ENCODE measurements at regions of chr13 and their contacts with region 1.

Region 1: GRCh38 chr13:72839831-72840426 is 58.0 kb downstream of the PIBF1 start:
- DNase-seq: peak; percentile 39 to 54
- H3K4me3 ChIP-seq: no peak overlapping the region
- H3K27ac ChIP-seq: no peak overlapping the region
- H3K4me1 ChIP-seq: no peaks in the 10 kb centered on the region
- H3K27me3 ChIP-seq: no peaks in the 10 kb centered on the region
- CTCF ChIP-seq: peak; percentile 81

Region 2: DNA sequence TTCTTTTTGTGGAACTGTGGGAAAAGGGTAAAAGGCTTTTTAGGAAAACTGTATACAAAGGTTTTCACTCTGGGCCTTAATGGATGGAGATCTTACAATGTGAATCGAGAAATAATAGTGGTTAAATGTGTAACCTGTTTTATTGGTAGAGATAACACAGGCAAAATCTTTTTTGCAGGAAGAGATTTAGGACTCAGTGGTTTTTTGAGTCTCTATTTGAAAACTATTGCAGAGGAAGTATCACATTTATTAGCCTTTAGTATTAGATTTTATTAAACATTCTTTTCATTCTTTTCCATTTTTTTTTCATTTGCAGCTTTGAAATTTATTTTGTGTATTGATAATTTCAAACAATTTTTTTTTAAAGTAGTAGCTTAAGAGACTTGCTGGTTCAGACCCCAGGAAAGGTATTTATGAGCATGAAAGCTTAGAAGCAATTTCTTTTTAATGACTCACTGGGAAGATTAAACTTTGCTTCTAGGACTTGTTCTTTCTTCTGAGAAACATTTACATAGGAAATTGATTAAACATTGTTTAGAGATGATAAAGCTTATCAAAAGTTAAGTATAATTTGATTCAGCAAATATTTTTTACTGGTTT is 229.4 kb after region 1 on chr13:
- CTCF ChIA-PET with region 1: no interaction called
- POLR2A ChIA-PET with region 1: interaction called, 10 read pairs
- intact Hi-C with region 1: no loop called
- DNase-seq: peak in 1 of 2 experiments; percentile 62
- H3K4me3 ChIP-seq: no peak overlapping the region
- H3K27ac ChIP-seq: peak overlapping the region; percentile 23
- H3K4me1 ChIP-seq: peaks cover 69% of the 10 kb centered on the region
- H3K27me3 ChIP-seq: no peaks in the 10 kb centered on the region
- CTCF ChIP-seq: no peak

Region 3: DNA sequence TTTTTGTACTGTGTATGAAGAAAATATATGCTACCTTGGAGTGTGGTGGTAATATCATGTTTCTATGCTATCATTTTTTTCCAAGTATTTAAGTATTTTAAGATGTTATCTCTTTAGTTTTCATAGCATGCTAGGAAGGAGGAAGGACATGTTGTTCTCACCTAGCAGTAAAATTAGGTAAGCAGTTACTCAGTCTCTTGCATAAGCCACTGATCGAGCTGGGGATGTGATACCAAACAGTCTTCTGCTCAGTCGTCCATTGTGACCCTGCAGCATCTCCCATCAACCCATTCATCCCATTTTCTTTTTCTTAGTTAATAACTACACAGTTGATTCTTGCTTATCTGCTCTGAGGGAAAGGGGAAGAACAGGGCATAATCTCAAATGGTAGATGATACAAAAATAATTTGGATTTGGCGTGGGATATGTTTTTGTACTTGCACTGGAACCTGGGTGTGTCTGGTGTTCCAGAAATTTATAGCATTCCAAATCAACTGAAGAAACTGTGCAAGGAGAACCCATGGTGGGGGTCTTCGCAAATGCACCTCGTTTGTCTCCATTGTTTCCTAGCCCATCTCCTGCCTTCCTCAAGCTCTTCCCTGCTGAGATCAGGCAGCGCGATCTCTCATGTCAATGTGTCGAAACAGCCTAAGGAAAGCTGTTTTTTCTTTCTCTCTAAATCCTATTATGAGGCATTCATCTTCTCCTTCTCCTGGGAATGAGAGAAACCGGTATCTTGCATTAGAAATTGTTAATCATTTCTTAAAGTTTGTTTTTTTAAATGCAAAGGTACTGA is 349.6 kb after region 1 on chr13:
- CTCF ChIA-PET with region 1: interaction called, 12 read pairs
- POLR2A ChIA-PET with region 1: no interaction called
- intact Hi-C with region 1: loop called (anchors 10 kb)
- DNase-seq: peak in 1 of 2 experiments; percentile 62
- H3K4me3 ChIP-seq: no peak overlapping the region
- H3K27ac ChIP-seq: no peak overlapping the region
- H3K4me1 ChIP-seq: peaks cover 30% of the 10 kb centered on the region
- H3K27me3 ChIP-seq: no peaks in the 10 kb centered on the region
- CTCF ChIP-seq: no peak

Region 4: GRCh38 chr13:73198991-73199411 is 359.1 kb after region 1 on chr13:
- CTCF ChIA-PET with region 1: no interaction called
- POLR2A ChIA-PET with region 1: no interaction called
- intact Hi-C with region 1: loop called (anchors 10 kb)
- DNase-seq: peak in 1 of 2 experiments; percentile 39
- H3K4me3 ChIP-seq: no peak overlapping the region
- H3K27ac ChIP-seq: no peak overlapping the region
- H3K4me1 ChIP-seq: peaks cover 16% of the 10 kb centered on the region
- H3K27me3 ChIP-seq: no peaks in the 10 kb centered on the region
- CTCF ChIP-seq: no peak

Region 5: DNA sequence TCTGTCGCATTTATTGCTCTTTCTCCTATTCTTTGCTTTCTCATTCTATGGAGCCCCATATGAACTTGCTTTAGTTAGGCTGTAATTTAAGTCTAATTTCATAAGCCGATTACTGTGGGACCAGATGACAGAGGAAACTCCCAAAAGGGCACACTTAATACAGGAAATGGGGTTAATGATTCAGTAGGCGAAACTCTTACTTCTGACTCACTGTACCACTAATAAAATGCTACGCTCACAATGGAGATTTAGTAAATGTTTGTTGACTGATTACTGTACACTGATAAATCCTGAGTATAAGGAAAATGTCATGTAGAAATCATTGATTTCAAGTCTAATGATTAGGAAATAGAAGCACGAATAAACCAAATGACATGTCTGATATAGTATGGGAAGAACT is 495.3 kb after region 1 on chr13:
- CTCF ChIA-PET with region 1: no interaction called
- POLR2A ChIA-PET with region 1: no interaction called
- intact Hi-C with region 1: loop called (anchors 5 kb)
- DNase-seq: peak in 1 of 2 experiments; percentile 96
- H3K4me3 ChIP-seq: no peak overlapping the region
- H3K27ac ChIP-seq: peak overlapping the region; percentile 99
- H3K4me1 ChIP-seq: peaks cover 44% of the 10 kb centered on the region
- H3K27me3 ChIP-seq: no peaks in the 10 kb centered on the region
- CTCF ChIP-seq: no peak